CD4-positive, alpha-beta T cell (primary cell): ENCODE measurements at regions of chr14 and their contacts with region 1.

Region 1: DNA sequence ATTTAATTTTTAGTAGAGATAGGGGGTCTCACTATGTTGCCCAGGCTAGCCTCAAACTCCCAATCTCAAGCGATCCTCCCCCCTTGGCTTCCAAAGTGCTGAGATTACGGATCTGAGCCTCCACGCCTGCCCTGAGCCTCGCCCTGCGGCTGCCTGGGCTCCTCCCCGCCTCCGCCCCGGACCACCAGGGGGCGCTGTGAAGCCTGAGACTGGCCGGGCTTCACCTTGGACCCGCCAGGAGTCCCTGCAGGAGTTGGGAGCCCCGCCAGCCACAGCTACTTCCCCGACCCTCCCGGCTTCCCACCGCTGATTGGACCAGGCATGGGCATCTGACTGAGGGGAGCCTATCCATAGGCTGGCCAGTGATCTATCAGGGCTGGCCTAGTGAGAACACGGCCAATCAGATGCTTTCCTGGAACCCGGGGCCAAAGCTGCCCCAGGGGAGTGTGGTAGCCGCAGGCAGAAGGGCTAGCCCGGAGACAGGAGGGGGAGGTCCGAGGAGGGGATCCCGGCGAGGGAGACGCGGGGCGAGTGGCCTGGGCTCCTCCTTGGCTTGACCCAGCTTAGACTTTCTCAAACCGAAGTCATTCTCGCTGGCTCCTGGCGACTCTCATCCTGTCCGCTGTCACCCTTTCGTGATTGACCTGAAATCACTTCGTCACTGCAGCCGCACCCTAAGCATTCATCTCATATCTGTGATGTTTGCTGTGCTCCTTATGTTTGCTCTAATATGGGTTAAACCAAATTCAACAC is 15.1 kb upstream of the ANKRD9 start:
- DNase-seq: peak; percentile 81 to 95 (median 88)
- ATAC-seq: peak; percentile 83
- H3K4me3 ChIP-seq: peak overlapping the region; percentile 70
- H3K4me3 Mint-ChIP-seq: peak overlapping the region; percentile 83
- H3K27ac ChIP-seq: peak overlapping the region; percentile 54 to 56
- H3K27ac Mint-ChIP-seq: peak overlapping the region; percentile 78
- H3K4me1 ChIP-seq: peaks cover 28% of the 10 kb centered on the region
- H3K4me1 Mint-ChIP-seq: peaks cover 32% of the 10 kb centered on the region
- H3K27me3 ChIP-seq: no peaks in the 10 kb centered on the region
- H3K27me3 Mint-ChIP-seq: no peaks in the 10 kb centered on the region
- CTCF ChIP-seq: peak; percentile 97

Region 2: GRCh38 chr14:102472791-102473150 is 51.9 kb before region 1 on chr14:
- CTCF ChIA-PET with region 1: no interaction called
- POLR2A ChIA-PET with region 1: no interaction called
- intact Hi-C with region 1: no loop called
- DNase-seq: no peak
- ATAC-seq: no peak
- H3K4me3 ChIP-seq: no peak overlapping the region
- H3K4me3 Mint-ChIP-seq: no peak overlapping the region
- H3K27ac ChIP-seq: no peak overlapping the region
- H3K27ac Mint-ChIP-seq: no peak overlapping the region
- H3K4me1 ChIP-seq: peaks cover 6% of the 10 kb centered on the region
- H3K4me1 Mint-ChIP-seq: peaks cover 14% of the 10 kb centered on the region
- H3K27me3 ChIP-seq: no peaks in the 10 kb centered on the region
- H3K27me3 Mint-ChIP-seq: no peaks in the 10 kb centered on the region
- CTCF ChIP-seq: no peak

Region 3: DNA sequence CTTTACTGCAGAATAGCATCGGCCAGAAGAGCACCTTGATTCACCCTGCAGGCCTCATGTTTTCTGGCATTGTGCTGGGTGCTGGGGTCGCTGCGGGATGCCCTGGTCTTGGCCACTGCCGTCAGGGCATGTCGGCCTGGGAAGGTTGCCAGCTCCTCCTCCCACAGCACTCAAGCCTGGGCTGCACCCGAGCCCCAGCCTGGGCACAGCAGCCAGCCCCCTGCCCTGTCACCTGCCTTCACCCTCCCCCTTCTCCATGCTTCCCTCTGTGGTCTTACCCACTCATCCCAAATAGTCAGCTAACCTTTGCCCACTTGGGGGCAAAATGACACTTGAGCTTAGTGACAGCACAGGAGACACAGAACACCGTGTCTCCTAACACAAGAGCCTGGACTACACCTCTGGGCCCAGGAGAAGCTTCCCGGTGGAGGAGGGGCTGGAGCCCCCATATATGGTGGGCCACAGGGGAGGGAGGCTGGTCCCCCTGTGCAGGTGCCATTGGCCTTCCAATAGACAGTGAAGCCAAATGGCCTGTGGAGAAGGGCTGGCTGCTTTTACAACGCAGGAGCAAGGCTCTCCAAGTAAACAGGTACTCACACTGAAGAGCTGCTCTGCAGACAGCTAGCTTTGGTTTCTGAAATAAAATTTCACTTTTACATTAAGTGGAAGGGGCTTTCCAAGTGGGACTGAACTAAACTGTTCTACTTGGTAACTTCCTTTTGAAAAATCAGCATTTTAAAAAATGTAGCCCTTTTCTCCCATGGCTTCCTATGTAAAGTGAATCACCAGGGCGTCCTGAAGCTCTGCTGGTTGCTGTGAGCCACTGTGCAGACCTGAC is 346.6 kb after region 1 on chr14:
- CTCF ChIA-PET with region 1: no interaction called
- POLR2A ChIA-PET with region 1: no interaction called
- intact Hi-C with region 1: no loop called
- DNase-seq: no peak
- ATAC-seq: no peak
- H3K4me3 ChIP-seq: no peak overlapping the region
- H3K4me3 Mint-ChIP-seq: no peak overlapping the region
- H3K27ac ChIP-seq: no peak overlapping the region
- H3K27ac Mint-ChIP-seq: no peak overlapping the region
- H3K4me1 ChIP-seq: peaks cover 10% of the 10 kb centered on the region
- H3K4me1 Mint-ChIP-seq: peaks cover 5% of the 10 kb centered on the region
- H3K27me3 ChIP-seq: no peaks in the 10 kb centered on the region
- H3K27me3 Mint-ChIP-seq: no peaks in the 10 kb centered on the region
- CTCF ChIP-seq: no peak

Region 4: GRCh38 chr14:102928412-102929240 is 404.0 kb after region 1 on chr14:
- CTCF ChIA-PET with region 1: no interaction called
- POLR2A ChIA-PET with region 1: no interaction called
- intact Hi-C with region 1: loop called in 1 of 2 experiments (anchors 5 kb)
- DNase-seq: peak; percentile 55 to 92 (median 78)
- ATAC-seq: peak; percentile 86
- H3K4me3 ChIP-seq: peak overlapping the region; percentile 54
- H3K4me3 Mint-ChIP-seq: peak overlapping the region; percentile 73
- H3K27ac ChIP-seq: no peak overlapping the region
- H3K27ac Mint-ChIP-seq: no peak overlapping the region
- H3K4me1 ChIP-seq: peaks cover 39% of the 10 kb centered on the region
- H3K4me1 Mint-ChIP-seq: peaks cover 16% of the 10 kb centered on the region
- H3K27me3 ChIP-seq: peaks cover 44% of the 10 kb centered on the region in 2 experiments
- H3K27me3 Mint-ChIP-seq: peaks cover 27% of the 10 kb centered on the region
- CTCF ChIP-seq: no peak

Region 5: DNA sequence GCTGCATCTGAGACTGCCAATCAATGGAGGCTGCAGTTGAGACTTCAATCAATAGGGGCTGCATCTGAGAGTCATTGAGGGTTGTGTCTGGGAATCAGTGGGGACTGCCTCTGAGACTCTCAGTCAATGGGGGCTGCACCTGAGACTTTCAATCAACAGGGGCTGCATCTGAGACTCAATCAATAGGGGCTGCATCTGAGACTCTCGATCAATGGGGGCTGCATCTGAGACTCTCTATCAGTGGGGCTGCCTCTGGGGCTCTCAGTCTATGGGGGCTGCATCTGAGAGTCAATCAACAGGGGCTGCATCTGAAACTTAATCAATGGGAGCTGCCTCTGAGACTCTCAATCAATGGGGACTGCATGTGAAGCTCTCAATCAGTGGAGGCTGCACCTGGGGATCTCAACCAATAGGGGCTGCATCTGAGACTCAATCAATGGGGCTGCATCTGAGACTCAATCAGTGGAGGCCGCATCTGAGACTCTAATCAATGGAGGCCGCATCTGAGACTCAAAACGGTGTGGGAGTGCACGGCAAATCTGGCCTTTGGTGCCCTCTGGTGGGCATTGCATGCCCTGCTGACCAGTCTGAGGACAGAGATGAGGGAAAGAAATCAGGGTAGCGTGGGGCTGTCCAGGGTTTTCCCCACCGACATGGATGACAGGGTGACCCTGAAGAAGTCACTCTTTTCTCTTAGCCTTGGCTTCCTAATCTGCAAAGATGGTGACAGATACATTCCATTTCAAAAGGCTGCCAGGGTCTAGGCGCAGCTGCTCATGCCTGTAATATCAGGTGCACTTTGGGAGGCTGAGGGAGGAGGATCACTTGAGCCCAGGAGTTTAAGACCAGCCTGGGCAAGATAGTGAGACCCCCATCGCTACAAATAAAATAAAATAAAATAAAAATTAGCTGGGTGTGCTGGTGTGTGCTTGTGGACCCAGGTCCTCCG is 768.1 kb after region 1 on chr14:
- CTCF ChIA-PET with region 1: no interaction called
- POLR2A ChIA-PET with region 1: no interaction called
- intact Hi-C with region 1: loop called in 1 of 2 experiments (anchors 10 kb)
- DNase-seq: peak; percentile 46 to 82 (median 65)
- ATAC-seq: peak; percentile 85
- H3K4me3 ChIP-seq: no peak overlapping the region
- H3K4me3 Mint-ChIP-seq: no peak overlapping the region
- H3K27ac ChIP-seq: no peak overlapping the region
- H3K27ac Mint-ChIP-seq: no peak overlapping the region
- H3K4me1 ChIP-seq: no peaks in the 10 kb centered on the region
- H3K4me1 Mint-ChIP-seq: no peaks in the 10 kb centered on the region
- H3K27me3 ChIP-seq: peaks cover 0 to 2% of the 10 kb centered on the region in 2 experiments
- H3K27me3 Mint-ChIP-seq: peaks cover 18% of the 10 kb centered on the region
- CTCF ChIP-seq: peak; percentile 84